Common myeloid progenitor, CD34-positive (primary cell): ENCODE measurements at regions of chr2 and their contacts with region 1.

Region 1: GRCh38 chr2:25268139-25268538 is 73.6 kb downstream of the DNMT3A start:
- DNase-seq: no peak
- H3K4me3 ChIP-seq: no peak overlapping the region
- H3K27ac ChIP-seq: no peak overlapping the region
- H3K4me1 ChIP-seq: peaks cover 0 to 8% (median 4%) of the 10 kb centered on the region in 4 experiments
- H3K27me3 ChIP-seq: no peaks in the 10 kb centered on the region

Region 2: GRCh38 chr2:25252281-25253105 is 15.6 kb before region 1 on chr2:
- CTCF ChIA-PET with region 1: interaction called, 19 read pairs
- POLR2A ChIA-PET with region 1: interaction called, 8 read pairs
- DNase-seq: peak; percentile 52 to 68 (median 63)
- H3K4me3 ChIP-seq: peak overlapping the region; percentile 12 to 79 (median 72)
- H3K27ac ChIP-seq: peak overlapping the region in 1 of 2 experiments; percentile 49
- H3K4me1 ChIP-seq: peaks cover 3 to 41% (median 38%) of the 10 kb centered on the region in 4 experiments
- H3K27me3 ChIP-seq: no peaks in the 10 kb centered on the region

Region 3: DNA sequence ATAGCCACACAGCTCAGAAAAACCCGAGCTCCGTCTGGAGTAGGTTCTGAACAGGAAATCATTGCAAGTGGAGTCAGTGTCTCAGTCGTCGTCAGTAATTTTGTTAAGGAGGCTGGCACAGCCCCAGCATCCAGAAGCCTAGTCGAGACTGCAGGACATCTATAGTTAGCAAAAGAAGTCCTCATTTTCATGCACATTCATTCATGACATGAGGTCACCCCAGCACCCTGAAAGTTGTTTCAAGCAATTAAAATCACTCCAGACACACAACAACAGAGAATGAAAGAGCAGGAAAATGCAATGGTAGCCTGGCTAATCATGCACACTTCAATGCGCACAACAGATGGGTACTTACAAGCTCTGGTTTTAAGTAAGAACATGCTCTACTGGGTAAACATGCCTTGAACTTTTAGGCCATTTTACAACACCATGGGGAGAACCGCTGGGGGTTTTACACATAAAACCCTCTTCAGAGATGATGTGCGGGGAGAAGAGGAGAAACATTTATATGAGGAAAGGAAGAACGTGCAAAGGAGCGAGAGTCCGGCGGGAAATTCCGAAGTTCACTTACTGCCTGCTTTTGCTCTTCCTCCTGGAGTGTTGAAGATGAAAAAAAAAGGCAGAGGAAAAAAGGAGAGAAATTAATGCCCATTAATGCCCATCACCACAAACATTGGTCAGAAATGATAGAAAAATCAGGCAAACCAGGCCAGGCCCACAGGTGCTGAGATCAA is 151.0 kb after region 1 on chr2:
- CTCF ChIA-PET with region 1: no interaction called
- POLR2A ChIA-PET with region 1: no interaction called
- DNase-seq: no peak
- H3K4me3 ChIP-seq: no peak overlapping the region
- H3K27ac ChIP-seq: peak overlapping the region in 1 of 2 experiments; percentile 4
- H3K4me1 ChIP-seq: peaks cover 0 to 25% (median 7%) of the 10 kb centered on the region in 4 experiments
- H3K27me3 ChIP-seq: no peaks in the 10 kb centered on the region

Region 4: DNA sequence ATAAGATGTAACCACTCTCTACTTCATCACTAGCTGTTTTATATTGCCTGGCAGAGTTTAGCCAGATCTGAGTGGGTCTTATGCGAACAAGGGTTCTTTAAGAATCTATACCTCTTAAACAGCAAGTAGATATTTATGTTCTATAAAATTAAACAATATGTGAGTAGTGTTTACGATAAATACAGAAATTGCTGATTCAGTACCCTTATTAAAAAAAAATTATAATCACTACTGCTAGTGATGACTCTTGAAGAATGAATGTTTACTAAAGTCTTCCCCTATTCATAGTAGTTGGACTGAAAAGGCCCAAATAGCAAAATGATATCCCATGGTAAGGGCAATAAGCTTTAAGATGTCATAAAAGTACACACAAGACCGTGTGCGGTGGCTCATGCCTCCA is 503.9 kb after region 1 on chr2:
- CTCF ChIA-PET with region 1: no interaction called
- POLR2A ChIA-PET with region 1: no interaction called
- DNase-seq: no peak
- H3K4me3 ChIP-seq: no peak overlapping the region
- H3K27ac ChIP-seq: no peak overlapping the region
- H3K4me1 ChIP-seq: peaks cover 0 to 2% (median 0%) of the 10 kb centered on the region in 4 experiments
- H3K27me3 ChIP-seq: no peaks in the 10 kb centered on the region